ENCODE measurements at regions of chr6 and their contacts with region 1.

Region 1: DNA sequence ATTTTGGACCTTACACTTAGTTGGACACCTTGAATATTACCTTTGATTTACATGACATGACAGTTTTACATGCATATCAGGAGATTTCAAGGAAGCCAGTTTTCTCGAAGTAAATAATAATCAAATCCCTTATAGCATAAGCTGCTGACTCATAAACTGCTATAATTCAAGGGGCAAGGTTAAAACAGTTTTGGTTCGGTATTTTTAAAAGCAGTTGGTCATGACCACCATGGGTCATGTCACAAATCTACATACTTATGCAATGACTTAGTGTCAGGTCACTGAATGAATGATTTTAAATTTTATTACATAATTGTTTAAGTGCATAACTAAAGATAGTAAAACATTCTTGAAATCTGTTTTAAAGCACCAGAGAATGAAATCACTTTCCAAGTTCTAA is 158.0 kb downstream of the DST start:
- DNase-seq: peak; percentile 90
- ATAC-seq: peak; percentile 83
- H3K4me3 ChIP-seq: peak overlapping the region; percentile 33
- H3K27ac ChIP-seq: peak overlapping the region; percentile 92
- H3K4me1 ChIP-seq: peaks cover 28% of the 10 kb centered on the region
- H3K27me3 ChIP-seq: no peaks in the 10 kb centered on the region
- CTCF ChIP-seq: no peak

Region 2: GRCh38 chr6:56510984-56511531 is 26.4 kb after region 1 on chr6:
- CTCF ChIA-PET with region 1: no interaction called
- POLR2A ChIA-PET with region 1: no interaction called
- intact Hi-C with region 1: no loop called
- DNase-seq: no peak
- ATAC-seq: no peak
- H3K4me3 ChIP-seq: no peak overlapping the region
- H3K27ac ChIP-seq: no peak overlapping the region
- H3K4me1 ChIP-seq: no peaks in the 10 kb centered on the region
- H3K27me3 ChIP-seq: no peaks in the 10 kb centered on the region
- CTCF ChIP-seq: no peak

Region 3: GRCh38 chr6:56524891-56525703 is 40.4 kb after region 1 on chr6:
- CTCF ChIA-PET with region 1: no interaction called
- POLR2A ChIA-PET with region 1: no interaction called
- intact Hi-C with region 1: loop called (anchors 2 kb)
- DNase-seq: peak; percentile 84
- ATAC-seq: peak; percentile 81
- H3K4me3 ChIP-seq: peak overlapping the region; percentile 15; the same call in 1 of the 2 replicates
- H3K27ac ChIP-seq: peak overlapping the region; percentile 85
- H3K4me1 ChIP-seq: peaks cover 72% of the 10 kb centered on the region
- H3K27me3 ChIP-seq: no peaks in the 10 kb centered on the region
- CTCF ChIP-seq: no peak

Measured in PC-3 (cell line).